ENCODE measurements at regions of chr4 and their contacts with region 1.

Region 1: GRCh38 chr4:69881173-69881773 is 21.3 kb upstream of the SULT1E1 start:
- DNase-seq: peak; percentile 62
- H3K4me3 Mint-ChIP-seq: no peak overlapping the region
- H3K27ac Mint-ChIP-seq: no peak overlapping the region
- H3K4me1 Mint-ChIP-seq: no peaks in the 10 kb centered on the region
- H3K27me3 Mint-ChIP-seq: no peaks in the 10 kb centered on the region
- CTCF ChIP-seq: peak; percentile 91

Region 2: GRCh38 chr4:69689599-69689998 is 191.7 kb before region 1 on chr4:
- CTCF ChIA-PET with region 1: interaction called, 33 read pairs
- POLR2A ChIA-PET with region 1: interaction called, 4 read pairs
- intact Hi-C with region 1: loop called (anchors 1 kb)
- DNase-seq: peak; percentile 65
- H3K4me3 Mint-ChIP-seq: no peak overlapping the region
- H3K27ac Mint-ChIP-seq: no peak overlapping the region
- H3K4me1 Mint-ChIP-seq: no peaks in the 10 kb centered on the region
- H3K27me3 Mint-ChIP-seq: no peaks in the 10 kb centered on the region
- CTCF ChIP-seq: peak; percentile 45

Region 3: GRCh38 chr4:69823481-69824186 is 57.6 kb before region 1 on chr4:
- CTCF ChIA-PET with region 1: interaction called, 88 read pairs
- POLR2A ChIA-PET with region 1: interaction called, 3 read pairs
- intact Hi-C with region 1: loop called (anchors 1 kb)
- DNase-seq: peak; percentile 65
- H3K4me3 Mint-ChIP-seq: no peak overlapping the region
- H3K27ac Mint-ChIP-seq: no peak overlapping the region
- H3K4me1 Mint-ChIP-seq: no peaks in the 10 kb centered on the region
- H3K27me3 Mint-ChIP-seq: no peaks in the 10 kb centered on the region
- CTCF ChIP-seq: peak; percentile 64

Region 4: DNA sequence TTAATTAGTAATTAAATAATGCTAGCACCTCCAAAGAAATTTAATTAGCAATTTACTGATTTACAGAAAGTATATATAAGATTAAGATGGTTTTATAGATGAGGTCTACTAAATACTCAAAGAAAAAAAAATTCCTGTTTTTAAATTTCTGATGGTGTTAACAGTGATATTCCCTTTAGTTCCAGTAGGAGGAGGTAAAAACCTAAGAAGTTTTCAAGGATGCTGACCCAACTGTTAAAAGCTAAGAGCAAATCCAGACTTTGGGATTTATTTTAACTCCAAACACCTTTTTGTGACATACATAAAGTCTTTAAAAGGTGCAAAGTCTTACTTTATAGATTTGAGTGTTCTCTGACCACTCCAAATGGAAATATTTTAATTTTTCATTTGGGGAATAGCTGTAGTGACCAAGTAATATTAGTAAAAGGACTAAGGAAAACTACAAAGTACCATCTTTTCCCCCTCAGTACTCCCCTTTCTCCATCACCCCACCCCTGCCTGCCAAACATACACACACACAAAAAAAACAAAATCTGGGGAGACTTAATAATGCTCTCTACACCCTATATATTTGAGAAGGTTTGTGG is 15.3 kb after region 1 on chr4:
- CTCF ChIA-PET with region 1: interaction called, 16 read pairs
- POLR2A ChIA-PET with region 1: no interaction called
- intact Hi-C with region 1: no loop called
- DNase-seq: peak; percentile 27
- H3K4me3 Mint-ChIP-seq: no peak overlapping the region
- H3K27ac Mint-ChIP-seq: no peak overlapping the region
- H3K4me1 Mint-ChIP-seq: no peaks in the 10 kb centered on the region
- H3K27me3 Mint-ChIP-seq: peaks cover 79% of the 10 kb centered on the region
- CTCF ChIP-seq: peak; percentile 58

Region 5: GRCh38 chr4:69910016-69910782 is 28.9 kb after region 1 on chr4:
- CTCF ChIA-PET with region 1: no interaction called
- POLR2A ChIA-PET with region 1: no interaction called
- intact Hi-C with region 1: no loop called
- DNase-seq: peak; percentile 55
- H3K4me3 Mint-ChIP-seq: no peak overlapping the region
- H3K27ac Mint-ChIP-seq: no peak overlapping the region
- H3K4me1 Mint-ChIP-seq: peaks cover 6% of the 10 kb centered on the region
- H3K27me3 Mint-ChIP-seq: peaks cover 52% of the 10 kb centered on the region
- CTCF ChIP-seq: no peak

Region 6: DNA sequence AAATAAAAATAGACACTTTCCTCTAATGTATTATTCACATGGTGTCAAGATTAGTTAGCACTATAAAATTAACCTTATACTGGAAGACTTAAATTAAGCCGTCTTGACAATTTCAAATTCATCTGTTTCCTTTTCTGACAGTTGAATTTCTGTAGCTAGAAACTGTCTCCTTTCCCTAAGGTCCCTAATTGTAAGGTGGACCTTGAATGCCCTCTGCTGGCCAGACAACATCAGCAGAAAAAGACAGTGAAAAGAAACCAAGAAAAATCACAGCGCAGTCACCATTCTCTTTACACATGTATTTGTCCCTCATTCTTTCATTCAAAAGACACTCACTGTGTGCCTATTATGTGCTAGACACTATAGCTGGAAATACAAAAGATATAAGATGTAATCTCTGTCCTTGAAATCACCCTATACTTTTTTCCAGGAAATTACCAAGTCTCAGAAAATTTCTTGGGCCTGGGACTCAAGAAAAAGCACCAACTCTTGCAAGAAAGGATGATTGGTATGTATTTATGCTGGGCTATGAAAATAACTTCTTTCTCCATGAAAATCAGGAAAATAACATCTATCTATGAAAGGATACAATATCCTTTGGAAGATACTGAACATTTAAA is 678.0 kb after region 1 on chr4:
- CTCF ChIA-PET with region 1: interaction called, 19 read pairs
- POLR2A ChIA-PET with region 1: no interaction called
- intact Hi-C with region 1: loop called (anchors 5 kb)
- DNase-seq: peak; percentile 74
- H3K4me3 Mint-ChIP-seq: no peak overlapping the region
- H3K27ac Mint-ChIP-seq: no peak overlapping the region
- H3K4me1 Mint-ChIP-seq: peaks cover 9% of the 10 kb centered on the region
- H3K27me3 Mint-ChIP-seq: no peaks in the 10 kb centered on the region
- CTCF ChIP-seq: peak; percentile 79